ENCODE measurements at regions of chr14 and their contacts with region 1.

Region 1: DNA sequence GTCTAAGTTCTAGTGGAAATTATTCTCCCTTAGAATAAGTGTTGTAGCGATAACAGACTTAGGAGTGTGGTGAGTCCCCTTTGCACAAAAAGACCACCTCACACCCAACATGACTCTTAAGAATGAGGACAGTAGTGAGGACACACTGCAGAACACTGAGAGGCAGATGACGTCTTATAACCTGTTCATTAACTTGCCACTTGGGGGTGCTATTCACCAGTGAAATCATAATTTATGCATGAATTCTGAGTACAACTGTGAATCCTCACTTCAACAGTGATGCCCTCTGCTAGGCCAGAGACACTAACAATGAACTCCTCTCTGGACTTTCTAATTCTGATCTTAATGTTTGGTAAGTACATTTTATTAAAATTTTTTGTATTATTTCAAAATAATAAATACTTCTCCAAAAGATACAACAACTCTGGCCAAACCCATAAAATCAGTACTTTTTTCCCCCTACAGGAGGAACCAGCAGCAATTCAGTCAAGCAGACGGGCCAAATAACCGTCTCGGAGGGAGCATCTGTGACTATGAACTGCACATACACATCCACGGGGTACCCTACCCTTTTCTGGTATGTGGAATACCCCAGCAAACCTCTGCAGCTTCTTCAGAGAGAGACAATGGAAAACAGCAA is 274.7 kb downstream of the DAD1 start:
- DNase-seq: no peak
- H3K4me3 Mint-ChIP-seq: peak overlapping the region; percentile 33
- H3K27ac Mint-ChIP-seq: peak overlapping the region; percentile 70
- H3K4me1 Mint-ChIP-seq: no peaks in the 10 kb centered on the region
- H3K27me3 Mint-ChIP-seq: no peaks in the 10 kb centered on the region

Region 2: GRCh38 chr14:22291406-22291805 is 22.9 kb before region 1 on chr14:
- intact Hi-C with region 1: no loop called
- DNase-seq: no peak
- H3K4me3 Mint-ChIP-seq: no peak overlapping the region
- H3K27ac Mint-ChIP-seq: no peak overlapping the region
- H3K4me1 Mint-ChIP-seq: no peaks in the 10 kb centered on the region
- H3K27me3 Mint-ChIP-seq: no peaks in the 10 kb centered on the region

Region 3: GRCh38 chr14:22375321-22375930 is 61.1 kb after region 1 on chr14:
- intact Hi-C with region 1: no loop called
- DNase-seq: no peak
- H3K4me3 Mint-ChIP-seq: no peak overlapping the region
- H3K27ac Mint-ChIP-seq: no peak overlapping the region
- H3K4me1 Mint-ChIP-seq: no peaks in the 10 kb centered on the region
- H3K27me3 Mint-ChIP-seq: no peaks in the 10 kb centered on the region

Region 4: GRCh38 chr14:22483863-22484593 is 169.7 kb after region 1 on chr14:
- intact Hi-C with region 1: loop called (anchors 10 kb)
- DNase-seq: no peak
- H3K4me3 Mint-ChIP-seq: peak overlapping the region; percentile 85
- H3K27ac Mint-ChIP-seq: peak overlapping the region; percentile 80
- H3K4me1 Mint-ChIP-seq: peaks cover 8% of the 10 kb centered on the region
- H3K27me3 Mint-ChIP-seq: no peaks in the 10 kb centered on the region

Region 5: DNA sequence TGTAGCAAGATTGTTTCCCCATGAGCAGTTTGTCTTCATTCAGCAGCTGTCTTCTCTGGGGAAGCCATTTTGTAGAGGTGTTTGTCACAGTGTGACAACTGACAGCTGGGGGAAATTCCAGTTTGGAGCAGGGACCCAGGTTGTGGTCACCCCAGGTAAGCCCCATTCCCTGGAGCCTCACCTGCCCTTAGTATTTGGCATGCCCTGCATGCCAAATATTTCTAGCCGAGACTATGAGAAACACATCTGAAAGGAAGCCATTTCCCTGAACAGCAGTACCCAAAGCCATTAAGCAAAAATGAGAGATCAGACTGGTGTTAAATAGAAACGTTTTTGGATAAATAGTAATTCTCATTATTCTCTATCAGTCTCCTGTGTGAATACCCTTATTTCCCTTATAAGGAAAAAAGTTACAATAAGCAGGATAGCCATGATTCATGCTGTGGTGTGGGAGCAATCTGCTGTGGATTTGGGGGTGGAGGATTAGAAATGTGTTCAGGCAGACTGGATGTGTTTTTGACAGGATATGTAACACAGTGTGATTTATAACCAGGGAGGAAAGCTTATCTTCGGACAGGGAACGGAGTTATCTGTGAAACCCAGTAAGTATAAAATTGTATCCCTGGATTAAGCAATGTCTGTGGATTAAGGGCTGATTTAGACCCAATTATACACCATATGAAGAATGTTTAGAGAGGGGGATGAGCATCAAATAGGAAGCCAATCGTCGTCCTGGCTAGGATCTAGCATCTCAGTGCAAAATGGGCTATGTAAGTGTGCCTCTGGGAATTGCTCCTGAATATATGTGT is 205.8 kb after region 1 on chr14:
- intact Hi-C with region 1: no loop called
- DNase-seq: no peak
- H3K4me3 Mint-ChIP-seq: peak overlapping the region; percentile 78
- H3K27ac Mint-ChIP-seq: peak overlapping the region; percentile 87
- H3K4me1 Mint-ChIP-seq: peaks cover 91% of the 10 kb centered on the region
- H3K27me3 Mint-ChIP-seq: no peaks in the 10 kb centered on the region

Measured in activated T-helper 2 cell treated with anti-CD3 and anti-CD28 coated beads, Interferon-gamma antibody, Interleukin-2, Interleukin-4, amounts not matched to agents 10 μg/mL and 5 μg/mL and 100 μg/mL, durations not matched to agents 14 hours and 24 hours and 36 hours (primary cell).